Sciatic nerve (tissue), 2 donors: ENCODE measurements at regions of chr2 and their contacts with region 1.

Region 1: DNA sequence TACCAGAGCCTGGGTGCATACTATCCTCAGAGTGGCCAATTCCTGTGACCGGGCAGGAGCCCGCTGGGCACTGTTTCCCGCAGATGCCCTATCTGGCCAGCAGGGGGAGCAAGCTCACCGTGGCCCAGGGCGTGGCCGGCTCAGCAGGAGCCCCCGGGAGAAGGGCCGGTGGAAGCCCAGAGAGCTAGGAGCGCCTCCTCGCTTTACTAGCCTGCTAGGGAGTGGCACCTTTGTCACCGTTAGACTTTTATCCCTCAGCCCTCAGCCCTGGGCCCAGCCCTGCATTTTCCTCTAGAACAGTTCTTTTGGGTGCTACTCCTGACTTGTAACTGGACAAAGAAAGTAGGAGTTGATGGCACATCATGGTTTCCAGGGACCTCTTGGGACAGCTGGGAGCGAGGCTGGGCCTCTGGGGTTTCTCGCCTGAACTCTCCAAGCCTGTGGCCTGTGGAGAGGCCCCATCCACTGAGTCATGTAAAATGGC is 24.0 kb downstream of the TMEM177 start:
- DNase-seq: peak; percentile 79
- ATAC-seq: peak; percentile 91

Region 2: GRCh38 chr2:119641562-119642258 is 61.2 kb before region 1 on chr2:
- intact Hi-C with region 1: no loop called
- DNase-seq: peak; percentile 84
- ATAC-seq: peak; percentile 89

Region 3: DNA sequence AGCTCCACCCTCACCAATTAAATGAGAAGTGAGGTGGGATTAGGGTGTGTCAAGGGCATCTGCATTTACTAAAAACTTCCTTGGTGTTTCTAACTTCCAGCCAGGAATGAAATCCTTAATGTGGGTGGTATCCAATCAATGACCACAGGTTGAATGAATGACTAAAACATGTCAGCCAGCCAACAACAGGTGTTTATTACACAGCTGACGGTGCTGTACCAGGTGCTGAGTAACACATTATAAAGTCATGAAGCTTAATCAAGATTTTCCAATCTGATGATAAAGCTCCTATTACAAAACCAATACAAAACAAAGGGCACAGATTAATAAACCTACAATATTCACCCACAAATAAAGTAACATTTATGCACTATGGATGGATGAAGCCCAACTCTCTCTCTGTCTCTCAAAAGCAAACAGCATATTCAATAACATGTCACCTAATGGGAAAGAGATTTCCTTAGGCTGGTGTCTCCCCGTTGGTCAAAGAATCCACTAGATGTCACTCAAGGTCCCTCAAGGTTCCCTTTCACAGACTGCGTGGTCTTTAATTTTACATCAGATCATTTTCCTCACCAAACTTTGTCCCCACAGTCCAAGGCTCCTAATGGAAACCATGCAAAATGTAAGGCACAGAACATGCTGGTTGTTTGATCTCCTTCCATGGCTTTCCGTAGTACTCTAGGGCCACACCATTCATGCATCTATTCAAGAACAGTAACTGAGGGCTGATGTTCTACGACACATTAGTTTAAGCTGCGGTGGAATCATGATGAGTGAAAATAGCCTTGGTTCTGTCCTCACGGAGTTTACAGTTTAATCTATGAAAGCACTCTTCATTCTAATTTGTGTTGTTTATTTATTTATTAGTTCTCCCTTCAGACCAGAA is 50.3 kb after region 1 on chr2:
- intact Hi-C with region 1: no loop called
- DNase-seq: no peak
- ATAC-seq: peak; percentile 54

Region 4: GRCh38 chr2:119838179-119838578 is 135.2 kb after region 1 on chr2:
- intact Hi-C with region 1: no loop called
- DNase-seq: no peak
- ATAC-seq: no peak

Region 5: DNA sequence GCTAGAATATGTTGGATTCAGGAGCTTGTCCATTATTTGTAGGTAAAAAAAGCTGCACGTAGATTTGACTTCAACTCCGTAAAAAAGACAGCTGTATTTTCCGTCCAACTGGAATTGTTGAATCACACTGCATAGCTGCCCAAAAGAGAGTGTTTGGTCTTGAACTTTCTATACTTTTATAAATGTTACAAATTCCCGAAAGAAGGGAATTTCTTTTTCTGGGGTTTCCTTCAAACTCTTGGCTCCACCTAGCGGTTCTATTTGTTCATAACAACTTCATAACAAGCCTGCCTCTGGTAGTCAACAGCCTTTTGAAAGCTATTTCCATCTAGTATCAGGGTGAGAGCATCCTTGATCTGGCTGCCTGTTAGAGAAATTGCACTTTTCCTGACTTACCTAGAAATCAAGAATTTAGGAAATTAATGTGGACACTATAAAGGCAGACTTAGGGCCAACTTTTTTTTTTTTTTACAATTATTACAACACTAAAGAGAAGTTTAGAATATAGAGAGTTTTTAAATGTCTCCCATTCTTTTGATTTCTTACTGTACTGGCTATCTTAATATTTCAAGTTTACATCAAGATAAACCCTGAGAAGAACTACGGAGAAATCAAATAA is 472.1 kb after region 1 on chr2:
- intact Hi-C with region 1: loop called (anchors 10 kb)
- DNase-seq: no peak
- ATAC-seq: peak; percentile 53